Naive thymus-derived CD4-positive, alpha-beta T cell (primary cell): ENCODE measurements at regions of chrX and their contacts with region 1.

Region 1: DNA sequence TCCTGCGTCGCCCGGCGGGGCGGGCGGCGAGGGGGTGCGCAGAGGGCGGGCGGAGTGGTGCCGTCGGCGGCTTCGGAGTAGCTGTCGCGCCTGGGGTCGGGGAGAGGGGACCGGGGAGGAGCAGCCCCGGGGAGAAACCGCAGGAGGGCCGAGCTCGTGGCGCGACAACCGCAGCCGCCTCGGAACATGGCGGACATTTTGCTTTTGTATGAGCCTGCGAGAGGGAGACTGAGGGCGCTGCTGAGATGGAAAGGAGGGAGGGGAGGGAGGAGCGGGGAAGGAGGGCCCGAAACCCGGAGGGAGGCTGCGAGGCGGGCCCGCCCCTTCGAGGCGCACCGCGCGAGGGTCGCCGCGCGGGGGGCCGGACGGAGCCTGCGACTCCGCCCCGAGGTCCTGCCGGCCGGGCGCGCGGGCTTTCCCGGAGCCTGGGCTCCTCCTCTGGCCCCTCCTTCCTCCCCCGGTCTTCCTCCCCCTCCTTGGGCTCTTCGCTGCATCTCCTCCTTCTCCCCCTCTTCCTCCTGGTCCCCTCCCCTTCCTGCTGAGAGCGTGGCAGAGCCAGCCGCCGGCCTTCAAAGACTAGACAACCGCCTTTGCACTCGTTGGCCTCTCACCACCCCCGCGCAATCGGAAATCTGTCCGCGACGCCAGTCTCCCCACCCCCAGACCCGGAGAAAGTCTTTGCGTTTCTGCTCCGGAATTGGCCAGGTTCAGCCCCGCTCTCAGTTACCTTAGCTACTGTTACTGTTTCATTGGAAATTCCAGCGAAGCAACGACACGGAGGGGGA is 1.1 kb downstream of the INTS6L start:
- DNase-seq: peak; percentile 45 to 90 (median 83)
- ATAC-seq: peak; percentile 83
- H3K4me3 ChIP-seq: peak overlapping the region; percentile 62
- H3K4me3 Mint-ChIP-seq: peak overlapping the region; percentile 92 to 100 (median 98)
- H3K27ac ChIP-seq: peak overlapping the region; percentile 90
- H3K27ac Mint-ChIP-seq: peak overlapping the region; percentile 95 to 100 (median 97)
- H3K4me1 ChIP-seq: peaks cover 5 to 12% of the 10 kb centered on the region in 2 donors
- H3K4me1 Mint-ChIP-seq: peaks cover 8 to 49% (median 41%) of the 10 kb centered on the region in 7 donors
- H3K27me3 ChIP-seq: no peaks in the 10 kb centered on the region
- H3K27me3 Mint-ChIP-seq: peaks cover 0 to 3% (median 0%) of the 10 kb centered on the region in 5 donors

Region 2: DNA sequence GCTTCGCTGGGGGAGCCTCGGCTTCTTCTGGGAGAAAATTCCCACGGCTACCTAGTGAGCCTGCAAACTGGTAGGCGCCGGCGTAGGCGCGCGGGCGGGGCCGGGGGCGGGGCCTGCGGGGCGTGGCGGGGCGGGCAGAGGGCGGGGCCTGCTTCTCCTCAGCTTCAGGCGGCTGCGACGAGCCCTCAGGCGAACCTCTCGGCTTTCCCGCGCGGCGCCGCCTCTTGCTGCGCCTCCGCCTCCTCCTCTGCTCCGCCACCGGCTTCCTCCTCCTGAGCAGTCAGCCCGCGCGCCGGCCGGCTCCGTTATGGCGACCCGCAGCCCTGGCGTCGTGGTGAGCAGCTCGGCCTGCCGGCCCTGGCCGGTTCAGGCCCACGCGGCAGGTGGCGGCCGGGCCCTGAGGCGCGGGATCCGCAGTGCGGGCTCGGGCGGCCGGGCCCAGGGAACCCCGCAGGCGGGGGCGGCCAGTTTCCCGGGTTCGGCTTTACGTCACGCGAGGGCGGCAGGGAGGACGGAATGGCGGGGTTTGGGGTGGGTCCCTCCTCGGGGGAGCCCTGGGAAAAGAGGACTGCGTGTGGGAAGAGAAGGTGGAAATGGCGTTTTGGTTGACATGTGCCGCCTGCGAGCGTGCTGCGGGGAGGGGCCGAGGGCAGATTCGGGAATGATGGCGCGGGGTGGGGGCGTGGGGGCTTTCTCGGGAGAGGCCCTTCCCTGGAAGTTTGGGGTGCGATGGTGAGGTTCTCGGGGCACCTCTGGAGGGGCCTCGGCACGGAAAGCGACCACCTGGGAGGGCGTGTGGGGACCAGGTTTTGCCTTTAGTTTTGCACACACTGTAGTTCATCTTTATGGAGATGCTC is 1061.4 kb before region 1 on chrX and contains the start of gene HPRT1:
- CTCF ChIA-PET with region 1: no interaction called
- POLR2A ChIA-PET with region 1: no interaction called
- intact Hi-C with region 1: loop called in 1 of 2 experiments (anchors 5 kb)
- DNase-seq: peak; percentile 57 to 80 (median 72)
- ATAC-seq: peak; percentile 99
- H3K4me3 ChIP-seq: peak within 1 kb of the TSS; percentile 53
- H3K4me3 Mint-ChIP-seq: peak within 1 kb of the TSS; percentile 78 to 97 (median 91)
- H3K27ac ChIP-seq: peak within 1 kb of the TSS; percentile 80
- H3K27ac Mint-ChIP-seq: peak within 1 kb of the TSS in 8 of 9 donors; percentile 14 to 95 (median 84)
- H3K4me1 ChIP-seq: no peaks in the 10 kb centered on the region
- H3K4me1 Mint-ChIP-seq: peaks cover 0 to 20% (median 10%) of the 10 kb centered on the region in 7 donors
- H3K27me3 ChIP-seq: no peaks in the 10 kb centered on the region
- H3K27me3 Mint-ChIP-seq: no peaks in the 10 kb centered on the region
- total RNA-seq, gene HPRT1: 13.6 to 73.7 (median 14.9) TPM

Region 3: GRCh38 chrX:135050603-135051002 is 471.0 kb before region 1 on chrX:
- CTCF ChIA-PET with region 1: no interaction called
- POLR2A ChIA-PET with region 1: no interaction called
- intact Hi-C with region 1: loop called (anchors 1 kb)
- DNase-seq: no peak
- ATAC-seq: no peak
- H3K4me3 ChIP-seq: no peak overlapping the region
- H3K4me3 Mint-ChIP-seq: peak overlapping the region; percentile 69 to 95 (median 90)
- H3K27ac ChIP-seq: no peak overlapping the region
- H3K27ac Mint-ChIP-seq: peak overlapping the region in 8 of 9 donors; percentile 77 to 95 (median 86)
- H3K4me1 ChIP-seq: no peaks in the 10 kb centered on the region
- H3K4me1 Mint-ChIP-seq: peaks cover 12 to 26% (median 24%) of the 10 kb centered on the region in 7 donors
- H3K27me3 ChIP-seq: no peaks in the 10 kb centered on the region
- H3K27me3 Mint-ChIP-seq: no peaks in the 10 kb centered on the region

Region 4: DNA sequence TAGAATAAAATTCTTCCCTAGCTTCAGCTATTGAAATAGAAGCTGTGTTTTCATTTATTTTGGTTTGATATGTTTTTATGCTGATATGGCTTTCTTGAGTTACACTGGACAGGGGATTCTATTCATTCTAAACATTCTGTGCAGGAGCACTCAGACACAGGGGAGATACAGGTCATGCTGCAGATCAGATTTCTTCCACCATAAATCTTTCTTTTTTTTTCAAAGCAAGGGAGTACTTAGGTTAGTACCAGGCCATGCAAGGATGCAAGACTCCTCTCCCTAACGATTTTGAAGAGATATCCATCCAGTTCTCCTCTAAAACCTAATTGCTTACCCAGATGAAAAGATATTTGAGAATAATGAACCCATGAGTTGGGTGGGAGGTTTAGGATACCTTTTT is 190.9 kb before region 1 on chrX:
- CTCF ChIA-PET with region 1: no interaction called
- POLR2A ChIA-PET with region 1: no interaction called
- intact Hi-C with region 1: no loop called
- DNase-seq: no peak
- ATAC-seq: no peak
- H3K4me3 ChIP-seq: no peak overlapping the region
- H3K4me3 Mint-ChIP-seq: no peak overlapping the region
- H3K27ac ChIP-seq: no peak overlapping the region
- H3K27ac Mint-ChIP-seq: no peak overlapping the region
- H3K4me1 ChIP-seq: no peaks in the 10 kb centered on the region
- H3K4me1 Mint-ChIP-seq: peaks cover 7 to 54% (median 28%) of the 10 kb centered on the region in 7 donors
- H3K27me3 ChIP-seq: no peaks in the 10 kb centered on the region
- H3K27me3 Mint-ChIP-seq: no peaks in the 10 kb centered on the region

Region 5: DNA sequence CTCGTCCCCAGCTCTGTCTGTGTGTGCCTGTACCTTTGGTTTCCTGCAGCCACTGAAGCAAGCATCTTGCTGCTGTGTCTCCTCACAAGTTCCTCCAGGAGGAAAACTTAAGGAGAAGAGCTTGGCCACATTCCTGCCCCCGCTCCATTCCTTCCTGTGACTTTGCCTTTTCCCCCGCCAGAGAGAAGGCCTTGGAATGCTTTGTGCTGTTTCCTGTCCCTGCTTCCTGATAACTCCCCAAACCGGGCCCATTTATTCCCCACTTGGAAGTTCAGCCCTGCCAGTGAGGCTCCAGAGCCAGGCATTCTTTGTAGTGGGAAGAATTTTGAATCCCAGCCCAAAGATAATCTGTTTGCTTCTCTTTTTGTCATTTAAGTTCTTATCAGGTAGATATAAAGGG is 66.8 kb before region 1 on chrX:
- CTCF ChIA-PET with region 1: no interaction called
- POLR2A ChIA-PET with region 1: no interaction called
- intact Hi-C with region 1: no loop called
- DNase-seq: no peak
- ATAC-seq: no peak
- H3K4me3 ChIP-seq: no peak overlapping the region
- H3K4me3 Mint-ChIP-seq: no peak overlapping the region
- H3K27ac ChIP-seq: no peak overlapping the region
- H3K27ac Mint-ChIP-seq: no peak overlapping the region
- H3K4me1 ChIP-seq: no peaks in the 10 kb centered on the region
- H3K4me1 Mint-ChIP-seq: peaks cover 0 to 3% (median 0%) of the 10 kb centered on the region in 7 donors
- H3K27me3 ChIP-seq: no peaks in the 10 kb centered on the region
- H3K27me3 Mint-ChIP-seq: peaks cover 0 to 7% (median 6%) of the 10 kb centered on the region in 5 donors

Region 6: GRCh38 chrX:135484641-135485289 is 36.8 kb before region 1 on chrX:
- CTCF ChIA-PET with region 1: no interaction called
- POLR2A ChIA-PET with region 1: no interaction called
- intact Hi-C with region 1: loop called (anchors 1 kb)
- DNase-seq: peak in 7 of 9 donors; percentile 12 to 59 (median 36)
- ATAC-seq: peak; percentile 60
- H3K4me3 ChIP-seq: no peak overlapping the region
- H3K4me3 Mint-ChIP-seq: no peak overlapping the region
- H3K27ac ChIP-seq: no peak overlapping the region
- H3K27ac Mint-ChIP-seq: peak overlapping the region in 1 of 9 donors; percentile 24
- H3K4me1 ChIP-seq: no peaks in the 10 kb centered on the region
- H3K4me1 Mint-ChIP-seq: no peaks in the 10 kb centered on the region
- H3K27me3 ChIP-seq: no peaks in the 10 kb centered on the region
- H3K27me3 Mint-ChIP-seq: no peaks in the 10 kb centered on the region

Region 7: GRCh38 chrX:135543924-135544323 is 22.3 kb after region 1 on chrX:
- CTCF ChIA-PET with region 1: interaction called, 3 read pairs
- POLR2A ChIA-PET with region 1: interaction called, 5 read pairs
- intact Hi-C with region 1: loop called in 1 of 2 experiments (anchors 1 kb)
- DNase-seq: peak in 7 of 9 donors; percentile 7 to 42 (median 30)
- ATAC-seq: peak; percentile 65
- H3K4me3 ChIP-seq: no peak overlapping the region
- H3K4me3 Mint-ChIP-seq: peak overlapping the region in 4 of 10 donors; percentile 12 to 59 (median 38)
- H3K27ac ChIP-seq: no peak overlapping the region
- H3K27ac Mint-ChIP-seq: peak overlapping the region in 4 of 9 donors; percentile 34 to 91 (median 82)
- H3K4me1 ChIP-seq: peaks cover 7 to 12% of the 10 kb centered on the region in 2 donors
- H3K4me1 Mint-ChIP-seq: peaks cover 21 to 58% (median 47%) of the 10 kb centered on the region in 7 donors
- H3K27me3 ChIP-seq: no peaks in the 10 kb centered on the region
- H3K27me3 Mint-ChIP-seq: no peaks in the 10 kb centered on the region

Region 8: DNA sequence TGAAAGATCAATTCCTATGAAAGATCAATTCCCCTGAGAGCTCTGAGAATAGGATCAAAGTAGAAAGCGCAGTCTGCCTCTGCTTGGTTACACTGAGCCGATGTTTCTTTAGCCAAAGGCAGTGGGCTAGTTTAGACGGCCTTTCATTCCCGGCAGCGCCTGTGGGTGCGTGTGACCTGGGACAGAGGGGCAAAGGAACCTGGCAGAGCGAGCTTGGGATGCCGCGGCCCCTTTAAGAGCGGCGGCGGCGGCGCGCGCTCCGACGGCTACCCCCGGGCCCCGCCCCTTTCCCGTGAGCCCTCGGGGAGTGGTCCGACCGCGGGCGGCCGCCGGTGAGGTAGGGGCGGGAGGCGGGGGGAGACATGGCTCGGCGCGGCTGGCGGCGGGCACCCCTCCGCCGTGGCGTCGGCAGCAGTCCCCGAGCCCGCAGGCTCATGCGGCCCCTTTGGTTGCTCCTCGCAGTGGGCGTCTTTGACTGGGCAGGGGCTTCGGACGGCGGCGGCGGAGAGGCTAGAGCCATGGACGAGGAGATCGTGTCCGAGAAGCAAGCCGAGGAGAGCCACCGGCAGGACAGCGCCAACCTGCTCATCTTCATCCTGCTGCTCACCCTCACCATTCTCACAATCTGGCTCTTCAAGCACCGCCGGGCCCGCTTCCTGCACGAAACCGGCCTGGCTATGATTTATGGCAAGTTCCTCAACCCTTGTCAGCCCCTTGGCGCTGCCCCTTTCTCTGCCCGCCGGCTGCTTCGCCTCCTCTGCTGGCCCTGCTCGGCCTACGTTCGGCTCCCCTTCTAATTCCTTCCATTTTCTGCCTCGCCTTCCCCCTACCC is 463.8 kb after region 1 on chrX and contains the start of gene SLC9A6:
- CTCF ChIA-PET with region 1: no interaction called
- POLR2A ChIA-PET with region 1: no interaction called
- intact Hi-C with region 1: loop called in 1 of 2 experiments (anchors 2 kb)
- DNase-seq: peak; percentile 26 to 75 (median 52)
- ATAC-seq: peak; percentile 96
- H3K4me3 ChIP-seq: peak within 1 kb of the TSS; percentile 73
- H3K4me3 Mint-ChIP-seq: peak within 1 kb of the TSS; percentile 79 to 95 (median 92)
- H3K27ac ChIP-seq: peak within 1 kb of the TSS; percentile 76
- H3K27ac Mint-ChIP-seq: peak within 1 kb of the TSS; percentile 80 to 99 (median 93)
- H3K4me1 ChIP-seq: peaks cover 20 to 23% of the 10 kb centered on the region in 2 donors
- H3K4me1 Mint-ChIP-seq: peaks cover 40 to 78% (median 61%) of the 10 kb centered on the region in 7 donors
- H3K27me3 ChIP-seq: no peaks in the 10 kb centered on the region
- H3K27me3 Mint-ChIP-seq: no peaks in the 10 kb centered on the region
- total RNA-seq, gene SLC9A6: 16.2 to 21.1 (median 18.9) TPM

Region 9: DNA sequence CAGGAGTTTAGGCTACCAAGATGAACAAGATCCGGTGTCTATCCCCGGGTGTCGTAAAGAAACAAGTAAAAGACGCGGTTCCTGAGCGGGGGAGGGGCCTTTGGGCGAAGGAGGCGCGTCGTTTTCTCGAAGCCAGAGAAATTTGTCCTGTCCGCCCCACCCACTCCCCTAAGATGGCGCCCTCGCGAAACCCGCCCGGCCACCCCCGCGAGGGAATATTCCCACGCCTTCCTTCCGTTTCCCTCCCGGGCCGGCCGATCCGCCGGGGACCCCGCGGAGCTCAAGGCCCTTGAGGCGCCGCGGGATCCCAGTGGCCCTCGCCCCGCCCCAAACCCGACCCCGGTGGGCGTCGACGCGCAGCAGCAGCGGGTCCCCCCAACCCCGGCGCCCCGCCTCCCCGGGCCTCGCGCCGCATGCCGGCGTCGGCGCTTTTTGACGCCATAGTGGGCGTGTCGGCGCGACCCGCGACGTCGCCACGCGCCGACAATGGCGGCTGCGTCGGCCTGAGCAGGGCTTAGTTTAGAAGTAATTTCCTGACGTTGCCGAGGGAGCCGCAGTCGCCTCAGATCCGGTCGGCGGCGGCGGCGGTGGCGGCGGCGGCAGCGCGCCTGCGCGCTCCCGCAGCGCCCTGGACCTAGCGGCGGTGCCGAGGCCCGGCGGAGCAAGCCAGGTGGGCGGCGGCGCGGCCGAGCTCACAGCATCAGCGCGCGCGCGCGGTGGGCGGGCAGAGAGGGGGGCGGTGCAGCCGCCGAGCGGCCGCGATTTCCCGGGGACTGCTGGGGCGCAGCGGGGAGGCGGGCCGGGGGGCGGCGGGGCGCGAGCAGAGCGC is 975.4 kb after region 1 on chrX and contains the start of gene HTATSF1:
- CTCF ChIA-PET with region 1: no interaction called
- POLR2A ChIA-PET with region 1: no interaction called
- intact Hi-C with region 1: loop called (anchors 1 to 2 kb)
- DNase-seq: peak; percentile 72 to 92 (median 88)
- ATAC-seq: peak; percentile 89
- H3K4me3 ChIP-seq: peak within 1 kb of the TSS; percentile 69
- H3K4me3 Mint-ChIP-seq: peak within 1 kb of the TSS; percentile 84 to 97 (median 94)
- H3K27ac ChIP-seq: peak within 1 kb of the TSS; percentile 86
- H3K27ac Mint-ChIP-seq: peak within 1 kb of the TSS; percentile 93 to 99 (median 97)
- H3K4me1 ChIP-seq: peaks cover 7 to 10% of the 10 kb centered on the region in 2 donors
- H3K4me1 Mint-ChIP-seq: peaks cover 6 to 24% (median 17%) of the 10 kb centered on the region in 7 donors
- H3K27me3 ChIP-seq: no peaks in the 10 kb centered on the region
- H3K27me3 Mint-ChIP-seq: peaks cover 0 to 5% (median 0%) of the 10 kb centered on the region in 5 donors
- total RNA-seq, gene HTATSF1: 25.9 to 67.2 (median 29.0) TPM